Lower lobe of right lung (tissue), 2 donors: ENCODE measurements at regions of chr10 and their contacts with region 1.

Region 1: GRCh38 chr10:91006001-91006751 is 85.3 kb upstream of the ANKRD1 start:
- DNase-seq: peak; percentile 49
- ATAC-seq: peak; percentile 82 to 91
- H3K4me3 ChIP-seq: no peak overlapping the region
- H3K27ac ChIP-seq: peak overlapping the region; percentile 8
- H3K4me1 ChIP-seq: no peaks in the 10 kb centered on the region
- H3K27me3 ChIP-seq: no peaks in the 10 kb centered on the region
- CTCF ChIP-seq: peak; percentile 94

Region 2: DNA sequence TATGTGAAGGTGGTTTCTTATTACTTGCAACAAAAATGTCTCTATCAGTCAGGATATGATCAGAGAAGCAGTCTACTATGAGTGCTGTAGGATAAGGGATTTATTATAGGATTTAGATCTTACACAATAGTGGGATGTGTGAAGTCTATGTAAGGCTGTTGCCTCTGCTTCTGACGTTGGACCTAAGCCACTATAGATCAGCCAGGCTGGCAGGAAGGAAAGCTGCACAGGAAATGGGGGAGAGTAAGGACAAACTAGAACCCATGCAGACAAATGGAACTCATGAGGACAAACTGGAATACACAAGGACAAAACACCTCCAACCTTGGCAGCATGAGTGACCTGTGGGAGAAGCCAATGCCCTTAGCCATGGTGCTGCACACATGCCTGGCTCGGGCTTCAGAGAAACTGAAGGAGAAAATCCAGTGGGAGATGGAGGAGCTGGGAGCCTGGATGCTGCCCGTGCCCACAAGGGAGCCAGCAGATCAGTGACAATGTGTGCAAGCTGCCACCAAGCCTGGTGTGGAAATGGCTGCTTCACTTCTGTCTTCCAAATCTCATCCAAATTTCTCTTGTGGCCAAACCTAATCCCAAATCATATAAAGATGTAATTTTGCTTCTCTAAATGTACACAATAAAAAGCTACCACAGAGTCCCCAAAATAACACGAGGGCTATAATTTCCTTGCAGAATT is 67.3 kb after region 1 on chr10:
- intact Hi-C with region 1: no loop called
- DNase-seq: no peak
- ATAC-seq: no peak
- H3K4me3 ChIP-seq: no peak overlapping the region
- H3K27ac ChIP-seq: no peak overlapping the region
- H3K4me1 ChIP-seq: peaks cover 14% of the 10 kb centered on the region
- H3K27me3 ChIP-seq: no peaks in the 10 kb centered on the region
- CTCF ChIP-seq: no peak

Region 3: DNA sequence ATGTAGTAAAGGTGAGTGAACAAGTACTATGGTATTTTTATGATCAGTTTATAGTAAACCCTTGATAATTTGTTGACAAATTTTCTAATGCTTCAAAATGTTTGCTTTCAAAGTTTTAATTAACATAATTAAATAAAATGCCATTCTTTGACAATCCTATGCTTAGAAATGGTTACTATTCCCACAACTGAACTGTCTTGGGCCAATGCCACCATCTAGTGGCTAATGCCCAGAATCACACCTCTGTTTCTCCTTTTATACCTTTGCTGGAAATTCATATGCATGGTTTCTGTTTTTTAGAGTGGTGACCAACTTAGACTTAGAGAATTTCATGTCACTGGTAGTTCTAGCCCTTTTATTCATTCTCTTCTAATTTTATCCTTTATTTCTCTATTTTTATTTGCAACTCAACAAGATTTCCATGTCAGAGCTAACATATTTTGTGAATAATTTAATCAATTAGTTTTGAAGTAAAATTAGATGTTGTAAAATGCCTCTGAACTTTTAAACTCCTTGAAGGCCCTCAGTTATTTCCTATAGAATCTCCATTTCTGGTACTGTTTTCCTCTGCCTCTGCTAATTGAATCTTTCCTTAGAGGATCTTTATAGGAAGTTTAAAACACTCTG is 245.4 kb after region 1 on chr10:
- intact Hi-C with region 1: loop called (anchors 10 kb)
- DNase-seq: no peak
- ATAC-seq: peak; percentile 74 to 83
- H3K4me3 ChIP-seq: no peak overlapping the region
- H3K27ac ChIP-seq: no peak overlapping the region
- H3K4me1 ChIP-seq: no peaks in the 10 kb centered on the region
- H3K27me3 ChIP-seq: no peaks in the 10 kb centered on the region
- CTCF ChIP-seq: peak; percentile 96